ENCODE measurements at regions of chr6 and their contacts with region 1.

Region 1: GRCh38 chr6:100099189-100100074 is 105.4 kb upstream of the MCHR2 start:
- DNase-seq: no peak
- H3K4me3 ChIP-seq: no peak overlapping the region
- H3K27ac ChIP-seq: no peak overlapping the region
- H3K27me3 ChIP-seq: peaks cover 0 to 5% (median 0%) of the 10 kb centered on the region in 45 donors
- CTCF ChIP-seq: peak; percentile 49 to 87 (median 72)

Region 2: DNA sequence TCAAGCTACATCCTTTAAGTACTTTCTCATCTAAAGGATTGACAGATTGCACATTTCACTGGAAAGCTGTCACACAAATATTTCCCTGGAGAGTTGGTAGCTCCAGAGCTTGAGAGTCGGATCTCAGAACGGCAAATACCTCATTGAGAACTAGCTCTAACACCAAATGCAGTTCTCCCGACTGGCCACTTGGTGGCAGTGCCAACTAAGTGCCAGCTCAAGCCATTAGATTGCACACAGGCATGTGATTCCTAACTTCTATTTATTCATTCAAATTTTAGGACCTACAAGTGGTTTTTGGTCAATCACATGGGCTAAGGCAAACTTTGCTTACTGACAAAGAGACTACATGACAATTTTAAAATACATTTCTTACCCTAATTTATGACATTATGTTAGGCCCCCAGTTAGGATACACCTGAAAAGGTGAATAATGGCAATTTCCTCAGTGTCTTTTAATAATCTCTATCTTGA is 97.5 kb before region 1 on chr6:
- intact Hi-C with region 1: loop called (anchors 5 kb)
- DNase-seq: peak; percentile 31 to 78 (median 64)
- H3K4me3 ChIP-seq: no peak overlapping the region
- H3K27ac ChIP-seq: no peak overlapping the region
- H3K27me3 ChIP-seq: peaks cover 0 to 14% (median 0%) of the 10 kb centered on the region in 45 donors
- CTCF ChIP-seq: peak; percentile 77 to 99 (median 91)

Region 3: DNA sequence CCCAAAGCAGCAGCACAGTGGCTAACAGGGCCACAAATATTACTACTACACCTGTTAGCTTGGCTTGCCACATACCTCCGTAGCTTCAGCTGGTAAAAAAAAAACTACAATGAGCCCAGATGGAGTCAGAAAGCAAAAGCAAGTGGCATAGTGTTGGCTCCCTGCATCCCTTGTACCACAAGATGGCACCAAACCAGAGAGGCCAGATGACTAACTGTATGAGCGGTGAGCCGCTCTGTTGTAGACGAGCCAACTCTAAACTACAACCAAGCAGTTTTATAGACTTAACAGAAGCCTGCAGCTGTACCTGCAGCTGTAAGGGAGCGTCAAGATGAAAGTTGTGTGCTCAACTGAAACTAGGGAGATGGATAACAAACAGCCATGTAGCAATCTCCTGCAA is 20.9 kb before region 1 on chr6:
- intact Hi-C with region 1: no loop called
- DNase-seq: no peak
- H3K4me3 ChIP-seq: no peak overlapping the region
- H3K27ac ChIP-seq: no peak overlapping the region
- H3K27me3 ChIP-seq: peaks cover 0 to 5% (median 0%) of the 10 kb centered on the region in 45 donors
- CTCF ChIP-seq: peak in 22 of 56 donors; percentile 7 to 43 (median 20)

Region 4: GRCh38 chr6:101380897-101381630 is 1281.6 kb after region 1 on chr6:
- intact Hi-C with region 1: no loop called
- DNase-seq: no peak
- H3K4me3 ChIP-seq: no peak overlapping the region
- H3K27ac ChIP-seq: no peak overlapping the region
- H3K27me3 ChIP-seq: no peaks in the 10 kb centered on the region
- CTCF ChIP-seq: no peak

Measured in dorsolateral prefrontal cortex (tissue), 120 donors.